ENCODE measurements at regions of chr19 and their contacts with region 1.

Region 1: GRCh38 chr19:8444645-8445487 is at the start of gene HNRNPM:
- DNase-seq: peak; percentile 89
- H3K4me3 ChIP-seq: peak within 1 kb of the TSS; percentile 87
- H3K27ac ChIP-seq: peak within 1 kb of the TSS; percentile 68
- H3K27me3 ChIP-seq: no peaks in the 10 kb centered on the region
- CTCF ChIP-seq: no peak
- polyA plus RNA-seq, gene HNRNPM: 99.6 and 122 TPM in 2 replicates

Region 2: DNA sequence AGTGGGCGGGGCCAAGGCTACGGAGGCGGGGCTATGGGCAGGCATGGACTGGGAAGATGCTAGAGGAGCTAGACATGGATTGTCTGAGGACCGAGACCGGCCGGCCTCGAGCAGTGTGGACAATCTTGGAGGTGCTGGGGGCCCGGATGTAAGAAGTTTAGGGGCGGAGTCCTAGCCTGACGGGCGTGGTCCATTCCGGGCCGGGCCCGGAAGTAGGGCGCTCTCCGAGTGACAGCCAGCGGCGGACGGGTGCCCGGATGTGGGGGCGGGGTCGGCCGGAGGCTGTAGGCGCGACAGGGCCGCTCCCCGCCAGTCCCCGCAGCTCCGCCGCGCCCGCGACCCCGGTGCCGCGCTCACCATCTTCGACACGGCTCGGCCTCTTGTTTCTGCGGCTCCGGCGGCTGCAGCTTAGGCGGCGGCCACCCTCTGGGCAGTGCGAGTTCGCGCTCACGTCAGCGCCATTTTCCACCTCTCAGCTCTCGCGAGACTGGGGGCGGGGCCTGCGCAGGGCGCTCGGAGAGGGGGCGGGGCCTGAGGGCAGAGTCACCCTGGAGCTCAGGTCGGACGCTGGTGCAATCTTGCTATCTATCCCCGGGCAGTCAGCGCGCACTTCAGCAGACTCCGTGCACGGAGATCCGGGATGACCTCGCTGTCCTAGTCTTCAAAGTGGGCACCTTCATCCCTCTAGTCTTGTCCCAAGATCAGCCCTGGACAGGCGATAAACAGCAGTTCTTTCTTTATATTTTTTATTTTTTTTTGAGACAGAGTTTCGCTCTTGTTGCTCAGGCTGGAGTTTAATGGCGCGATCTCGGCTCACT is 69.0 kb after region 1 on chr19 and contains the start of gene ZNF414:
- CTCF ChIA-PET with region 1: no interaction called
- POLR2A ChIA-PET with region 1: interaction called, 12 read pairs
- DNase-seq: peak; percentile 92
- H3K4me3 ChIP-seq: peak within 1 kb of the TSS; percentile 76
- H3K27ac ChIP-seq: peak within 1 kb of the TSS; percentile 73
- H3K27me3 ChIP-seq: peaks cover 3% of the 10 kb centered on the region
- CTCF ChIP-seq: no peak
- polyA plus RNA-seq, gene ZNF414: 2.0 and 3.6 TPM in 2 replicates

Region 3: DNA sequence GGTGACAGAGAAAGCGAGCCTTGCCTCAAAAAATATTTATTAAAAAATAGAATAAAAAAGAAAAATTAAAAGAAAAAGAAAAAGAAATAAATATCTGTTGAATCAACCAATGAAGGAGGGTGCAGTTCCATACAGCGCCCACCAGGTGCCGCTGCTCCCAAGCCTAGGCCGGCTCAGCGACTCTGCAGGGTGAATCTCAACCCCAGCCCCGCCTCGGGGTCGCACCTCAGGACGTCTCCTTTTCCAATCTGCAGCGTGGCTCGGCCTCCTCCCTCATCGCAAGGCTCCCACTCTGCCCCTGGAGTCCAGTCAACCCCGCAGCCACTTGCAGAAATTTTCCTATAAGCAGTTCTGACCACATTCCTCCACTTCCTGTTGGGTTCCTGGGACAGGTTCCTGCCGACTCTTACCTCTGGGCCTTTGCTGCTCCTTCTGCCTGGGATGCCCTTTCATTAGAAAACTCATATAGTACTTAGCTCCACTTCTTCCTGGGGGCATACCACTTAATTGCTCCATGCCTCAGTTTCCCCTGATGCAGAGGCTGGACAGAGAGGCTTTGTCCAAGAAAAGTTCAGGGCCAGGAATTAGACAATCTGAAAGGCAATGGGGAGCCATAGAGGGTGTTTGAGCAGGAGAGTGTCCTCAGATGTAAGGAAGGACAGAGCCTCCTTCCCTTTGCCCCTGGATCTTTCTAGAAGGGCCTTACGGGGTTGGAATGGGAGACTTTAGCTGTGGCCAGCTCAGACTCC is 209.9 kb after region 1 on chr19:
- CTCF ChIA-PET with region 1: no interaction called
- POLR2A ChIA-PET with region 1: no interaction called
- DNase-seq: no peak
- H3K4me3 ChIP-seq: no peak overlapping the region; the same call in 1 of the 2 replicates
- H3K27ac ChIP-seq: no peak overlapping the region
- H3K27me3 ChIP-seq: no peaks in the 10 kb centered on the region
- CTCF ChIP-seq: peak; percentile 94

Measured in AG04450 (cell line).